CD4-positive, alpha-beta memory T cell (primary cell): ENCODE measurements at regions of chr12 and their contacts with region 1.

Region 1: DNA sequence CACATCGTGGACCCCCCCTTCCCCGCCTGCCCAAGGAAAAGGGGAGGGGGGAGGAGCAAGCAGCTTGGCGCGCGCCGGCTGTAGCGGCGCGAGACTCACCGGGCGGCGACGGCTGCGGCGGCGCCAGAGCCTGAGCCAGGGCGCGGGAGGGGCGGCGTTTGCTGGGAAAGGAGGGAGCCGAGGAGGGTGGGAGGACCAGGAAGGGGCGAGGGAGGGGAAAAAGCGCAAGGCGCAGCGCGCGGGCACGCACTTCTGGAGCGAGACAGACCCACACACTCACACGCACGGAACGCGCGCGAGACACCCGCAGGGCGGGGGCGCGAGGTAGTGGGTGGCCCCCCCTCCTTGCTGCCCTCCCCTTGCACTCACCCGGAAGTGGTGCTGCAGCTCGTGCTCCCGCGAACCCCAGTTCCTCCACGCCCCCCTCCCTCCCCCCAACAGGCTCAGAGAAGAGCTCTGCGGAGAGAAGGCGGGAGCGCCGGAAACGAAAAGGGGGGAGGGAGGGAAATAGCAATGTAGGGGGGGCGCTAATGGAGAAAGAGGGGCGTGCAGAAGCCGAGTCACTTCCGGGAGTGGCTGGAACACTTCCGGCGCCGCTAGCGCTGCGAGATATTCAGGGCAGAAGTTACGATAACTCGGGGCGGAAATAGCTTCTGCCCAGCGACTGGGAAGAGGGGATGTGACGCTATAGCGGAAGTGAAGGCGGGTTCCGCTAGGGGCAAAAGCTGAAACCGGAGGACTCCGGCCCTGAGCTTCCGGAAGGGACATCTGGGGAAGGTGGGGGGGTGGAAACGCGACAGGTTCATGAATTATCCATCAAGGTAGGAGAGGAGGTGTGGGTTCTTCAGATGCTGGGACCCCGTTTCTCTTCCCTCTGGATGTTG is at the start of gene ZNF384:
- DNase-seq: peak; percentile 93 to 98 (median 97)
- H3K4me3 ChIP-seq: peak within 1 kb of the TSS; percentile 59 to 83
- H3K4me3 Mint-ChIP-seq: peak within 1 kb of the TSS; percentile 92 to 98 (median 96)
- H3K27ac ChIP-seq: peak within 1 kb of the TSS; percentile 93
- H3K27ac Mint-ChIP-seq: peak within 1 kb of the TSS; percentile 92 to 100 (median 99)
- H3K4me1 ChIP-seq: peaks cover 58% of the 10 kb centered on the region
- H3K4me1 Mint-ChIP-seq: peaks cover 40 to 59% (median 46%) of the 10 kb centered on the region in 4 donors
- H3K27me3 ChIP-seq: no peaks in the 10 kb centered on the region
- H3K27me3 Mint-ChIP-seq: no peaks in the 10 kb centered on the region
- total RNA-seq, gene ZNF384: 88.6 to 88.7 TPM

Region 2: DNA sequence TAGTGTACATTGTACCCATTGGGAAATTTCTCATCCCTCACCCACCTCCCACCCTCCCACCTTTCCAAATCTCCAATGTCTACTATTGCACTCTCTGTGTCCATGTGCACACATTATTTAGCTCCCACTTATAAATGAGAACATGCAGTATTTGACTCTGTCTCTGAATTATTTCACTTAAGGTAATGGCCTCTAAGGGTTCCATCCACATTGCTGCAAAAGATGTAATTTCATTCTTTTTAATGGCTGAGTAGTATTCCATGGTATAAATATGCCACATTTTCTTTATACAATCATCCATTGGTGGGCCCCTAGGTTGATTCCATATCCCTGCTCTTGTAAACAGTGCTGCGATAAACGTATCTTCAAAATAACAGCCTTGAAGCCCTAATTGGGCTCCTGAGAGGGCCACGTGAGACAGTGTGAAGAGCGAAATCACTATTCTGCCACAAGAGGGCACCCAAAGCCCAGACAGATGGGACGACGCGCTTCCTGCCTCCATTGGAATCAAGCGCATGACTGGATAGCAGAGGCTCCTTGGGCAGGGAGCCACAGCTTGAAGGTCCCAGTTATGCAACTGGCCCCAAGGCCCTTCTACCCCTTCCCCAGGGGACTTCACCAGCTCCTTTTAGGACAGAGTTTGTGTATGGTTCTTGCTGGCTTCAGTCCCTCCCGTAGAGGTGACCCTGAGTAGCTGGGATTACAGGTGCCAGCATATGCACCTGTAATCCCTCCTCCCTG is 265.8 kb before region 1 on chr12:
- CTCF ChIA-PET with region 1: no interaction called
- POLR2A ChIA-PET with region 1: no interaction called
- intact Hi-C with region 1: loop called (anchors 10 kb)
- DNase-seq: peak; percentile 83 to 86 (median 85)
- H3K4me3 ChIP-seq: no peak overlapping the region
- H3K4me3 Mint-ChIP-seq: peak overlapping the region in 6 of 8 donors; percentile 12 to 56 (median 31)
- H3K27ac ChIP-seq: peak overlapping the region; percentile 8
- H3K27ac Mint-ChIP-seq: peak overlapping the region; percentile 68 to 90 (median 82)
- H3K4me1 ChIP-seq: peaks cover 42% of the 10 kb centered on the region
- H3K4me1 Mint-ChIP-seq: peaks cover 28 to 38% (median 33%) of the 10 kb centered on the region in 4 donors
- H3K27me3 ChIP-seq: no peaks in the 10 kb centered on the region
- H3K27me3 Mint-ChIP-seq: peaks cover 0 to 6% of the 10 kb centered on the region in 2 donors

Region 3: GRCh38 chr12:6570264-6570887 is 118.9 kb before region 1 on chr12:
- CTCF ChIA-PET with region 1: interaction called, 7 read pairs
- POLR2A ChIA-PET with region 1: interaction called, 10 read pairs
- intact Hi-C with region 1: loop called (anchors 2 kb)
- DNase-seq: peak in 3 of 5 donors; percentile 20 to 29 (median 25)
- H3K4me3 ChIP-seq: no peak overlapping the region
- H3K4me3 Mint-ChIP-seq: peak overlapping the region in 5 of 8 donors; percentile 10 to 100 (median 61)
- H3K27ac ChIP-seq: no peak overlapping the region
- H3K27ac Mint-ChIP-seq: peak overlapping the region; percentile 67 to 100 (median 75)
- H3K4me1 ChIP-seq: peaks cover 42% of the 10 kb centered on the region
- H3K4me1 Mint-ChIP-seq: peaks cover 17 to 51% (median 33%) of the 10 kb centered on the region in 4 donors
- H3K27me3 ChIP-seq: no peaks in the 10 kb centered on the region
- H3K27me3 Mint-ChIP-seq: no peaks in the 10 kb centered on the region

Region 4: DNA sequence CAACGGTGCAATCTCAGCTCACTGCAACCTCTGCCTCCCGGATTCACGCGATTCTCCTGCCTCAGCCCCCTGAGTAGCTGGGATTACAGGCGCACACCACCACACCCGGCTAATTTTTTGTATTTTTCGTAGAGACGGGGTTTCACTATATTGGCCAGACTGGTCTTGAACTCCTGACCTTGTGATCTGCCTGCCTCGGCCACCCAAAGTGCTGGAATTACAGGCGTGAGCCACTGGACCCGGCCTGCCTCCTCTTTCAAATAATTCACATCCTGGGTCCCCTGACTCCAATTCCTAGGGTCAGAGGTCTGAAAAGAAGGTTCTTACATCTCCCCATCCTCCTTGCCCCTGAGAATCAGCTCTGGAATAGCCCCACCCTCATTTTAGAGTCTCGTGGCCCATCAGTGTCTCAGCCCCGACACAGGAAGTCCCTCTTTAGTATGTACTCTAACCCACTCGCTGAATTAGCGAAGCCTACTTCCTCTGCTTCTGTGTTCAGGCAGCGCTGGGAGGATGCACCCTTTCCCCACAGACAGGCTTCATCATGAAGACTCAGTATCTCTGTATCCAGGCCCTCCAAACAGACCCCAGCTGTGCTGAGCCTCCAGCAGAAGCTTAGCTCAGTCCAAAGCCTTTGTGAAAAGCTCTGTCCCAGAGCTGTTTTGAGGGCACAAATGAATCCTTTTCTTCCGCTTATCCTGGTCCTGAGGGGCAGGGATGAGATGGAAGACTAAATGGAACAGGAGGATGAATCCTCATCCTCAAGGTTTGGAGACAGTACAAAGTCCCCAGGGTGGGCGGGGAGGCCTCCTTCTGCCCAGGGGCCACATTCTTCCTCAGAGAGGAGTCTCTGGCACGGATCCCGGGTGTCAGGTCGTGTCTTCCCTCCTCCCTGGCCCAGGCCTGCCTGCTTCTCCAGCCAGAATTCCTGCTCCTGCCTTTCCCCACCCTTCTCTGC is 56.9 kb before region 1 on chr12:
- CTCF ChIA-PET with region 1: interaction called, 3 read pairs
- POLR2A ChIA-PET with region 1: interaction called, 15 read pairs
- intact Hi-C with region 1: no loop called
- DNase-seq: peak; percentile 52 to 66 (median 62)
- H3K4me3 ChIP-seq: no peak overlapping the region
- H3K4me3 Mint-ChIP-seq: peak overlapping the region; percentile 82 to 93 (median 88)
- H3K27ac ChIP-seq: peak overlapping the region; percentile 63
- H3K27ac Mint-ChIP-seq: peak overlapping the region; percentile 91 to 98 (median 97)
- H3K4me1 ChIP-seq: peaks cover 50% of the 10 kb centered on the region
- H3K4me1 Mint-ChIP-seq: peaks cover 35 to 70% (median 52%) of the 10 kb centered on the region in 4 donors
- H3K27me3 ChIP-seq: no peaks in the 10 kb centered on the region
- H3K27me3 Mint-ChIP-seq: no peaks in the 10 kb centered on the region

Region 5: GRCh38 chr12:6752921-6753771 is 63.9 kb after region 1 on chr12 and contains the start of gene MLF2:
- CTCF ChIA-PET with region 1: interaction called, 14 read pairs
- POLR2A ChIA-PET with region 1: interaction called, 42 read pairs
- intact Hi-C with region 1: loop called (anchors 1 kb)
- DNase-seq: peak; percentile 96 to 98 (median 97)
- H3K4me3 ChIP-seq: peak within 1 kb of the TSS; percentile 62 to 77
- H3K4me3 Mint-ChIP-seq: peak within 1 kb of the TSS; percentile 94 to 98 (median 96)
- H3K27ac ChIP-seq: peak within 1 kb of the TSS; percentile 84
- H3K27ac Mint-ChIP-seq: peak within 1 kb of the TSS; percentile 99 to 100 (median 99)
- H3K4me1 ChIP-seq: peaks cover 13% of the 10 kb centered on the region
- H3K4me1 Mint-ChIP-seq: peaks cover 10 to 24% (median 17%) of the 10 kb centered on the region in 4 donors
- H3K27me3 ChIP-seq: no peaks in the 10 kb centered on the region
- H3K27me3 Mint-ChIP-seq: peaks cover 0 to 1% of the 10 kb centered on the region in 2 donors
- total RNA-seq, gene MLF2: 79.8 to 80.3 TPM

Region 6: DNA sequence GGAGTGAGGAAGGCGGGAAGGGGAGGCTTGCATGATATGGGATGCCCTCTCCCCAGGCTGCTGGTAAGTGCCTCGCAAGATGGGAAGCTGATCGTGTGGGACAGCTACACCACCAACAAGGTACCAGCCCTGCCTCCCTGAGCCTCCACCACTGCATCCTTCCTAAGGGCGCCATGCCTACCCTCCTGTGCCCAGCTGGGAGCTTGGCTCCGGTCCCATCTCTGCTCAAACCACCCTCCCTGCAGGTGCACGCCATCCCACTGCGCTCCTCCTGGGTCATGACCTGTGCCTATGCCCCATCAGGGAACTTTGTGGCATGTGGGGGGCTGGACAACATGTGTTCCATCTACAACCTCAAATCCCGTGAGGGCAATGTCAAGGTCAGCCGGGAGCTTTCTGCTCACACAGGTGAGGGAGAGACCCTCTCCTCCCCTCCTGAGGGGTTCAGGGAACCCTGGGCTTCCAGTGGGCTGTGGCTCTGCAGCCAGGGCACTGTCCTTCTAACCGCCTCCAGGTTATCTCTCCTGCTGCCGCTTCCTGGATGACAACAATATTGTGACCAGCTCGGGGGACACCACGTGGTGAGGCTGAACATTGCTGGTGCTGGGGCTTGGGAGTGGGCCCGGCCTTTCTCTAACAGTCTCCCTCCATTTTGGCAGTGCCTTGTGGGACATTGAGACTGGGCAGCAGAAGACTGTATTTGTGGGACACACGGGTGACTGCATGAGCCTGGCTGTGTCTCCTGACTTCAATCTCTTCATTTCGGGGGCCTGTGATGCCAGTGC is 154.1 kb after region 1 on chr12:
- CTCF ChIA-PET with region 1: no interaction called
- POLR2A ChIA-PET with region 1: no interaction called
- intact Hi-C with region 1: no loop called
- DNase-seq: peak in 1 of 5 donors; percentile 3
- H3K4me3 ChIP-seq: no peak overlapping the region
- H3K4me3 Mint-ChIP-seq: no peak overlapping the region
- H3K27ac ChIP-seq: no peak overlapping the region
- H3K27ac Mint-ChIP-seq: no peak overlapping the region
- H3K4me1 ChIP-seq: no peaks in the 10 kb centered on the region
- H3K4me1 Mint-ChIP-seq: no peaks in the 10 kb centered on the region
- H3K27me3 ChIP-seq: no peaks in the 10 kb centered on the region
- H3K27me3 Mint-ChIP-seq: no peaks in the 10 kb centered on the region

Region 7: GRCh38 chr12:6867413-6868210 is 178.4 kb after region 1 on chr12 and contains the start of gene TPI1:
- CTCF ChIA-PET with region 1: interaction called, 7 read pairs
- POLR2A ChIA-PET with region 1: interaction called, 28 read pairs
- intact Hi-C with region 1: no loop called
- DNase-seq: peak; percentile 59 to 68 (median 62)
- H3K4me3 ChIP-seq: peak within 1 kb of the TSS; percentile 36 to 67
- H3K4me3 Mint-ChIP-seq: peak within 1 kb of the TSS; percentile 89 to 96 (median 92)
- H3K27ac ChIP-seq: peak within 1 kb of the TSS; percentile 69
- H3K27ac Mint-ChIP-seq: peak within 1 kb of the TSS; percentile 91 to 97 (median 93)
- H3K4me1 ChIP-seq: peaks cover 51% of the 10 kb centered on the region
- H3K4me1 Mint-ChIP-seq: peaks cover 33 to 58% (median 48%) of the 10 kb centered on the region in 4 donors
- H3K27me3 ChIP-seq: no peaks in the 10 kb centered on the region
- H3K27me3 Mint-ChIP-seq: no peaks in the 10 kb centered on the region
- total RNA-seq, gene TPI1: 155 to 164 TPM

Region 8: DNA sequence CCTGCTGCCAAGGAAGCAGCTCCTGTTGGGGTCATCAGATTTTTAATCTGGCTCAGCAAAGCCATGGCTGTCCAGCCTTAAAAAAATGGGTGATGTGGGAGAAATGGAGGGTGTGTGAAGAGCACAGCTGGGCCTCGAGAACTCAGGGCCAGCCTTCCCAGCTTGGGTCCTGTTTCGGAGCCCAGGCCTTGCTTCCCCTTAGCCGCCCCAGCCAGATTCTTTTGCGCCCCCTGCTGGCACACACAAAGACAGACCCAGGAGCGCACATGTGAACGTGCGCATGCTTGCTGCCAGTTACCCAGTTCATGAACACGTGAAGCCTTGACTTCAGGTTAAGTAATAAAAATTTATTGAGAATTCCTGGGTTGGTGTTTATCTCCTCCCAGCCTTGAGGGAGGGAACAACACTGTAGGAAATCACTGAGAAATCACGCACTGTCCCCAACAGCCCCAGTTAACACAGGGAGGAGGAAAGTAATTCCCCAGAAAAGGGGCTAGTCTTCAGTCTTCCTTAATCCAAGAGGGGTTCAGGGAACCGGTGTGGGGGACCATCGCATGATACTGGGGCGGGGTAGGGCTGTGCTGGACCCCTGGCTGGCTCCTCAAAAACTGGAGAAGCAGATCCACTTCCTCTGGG is 275.9 kb after region 1 on chr12:
- CTCF ChIA-PET with region 1: interaction called, 3 read pairs
- POLR2A ChIA-PET with region 1: interaction called, 9 read pairs
- intact Hi-C with region 1: loop called (anchors 1 kb)
- DNase-seq: peak; percentile 85 to 87 (median 85)
- H3K4me3 ChIP-seq: no peak overlapping the region
- H3K4me3 Mint-ChIP-seq: peak overlapping the region in 1 of 8 donors; percentile 39
- H3K27ac ChIP-seq: peak overlapping the region; percentile 53
- H3K27ac Mint-ChIP-seq: peak overlapping the region; percentile 88 to 94 (median 93)
- H3K4me1 ChIP-seq: peaks cover 68% of the 10 kb centered on the region
- H3K4me1 Mint-ChIP-seq: peaks cover 32 to 63% (median 47%) of the 10 kb centered on the region in 4 donors
- H3K27me3 ChIP-seq: no peaks in the 10 kb centered on the region
- H3K27me3 Mint-ChIP-seq: no peaks in the 10 kb centered on the region